ENCODE measurements at regions of chrX and their contacts with region 1.

Region 1: GRCh38 chrX:16445166-16445752 is 204.7 kb upstream of the S100G start:
- DNase-seq: peak in 8 of 9 experiments; percentile 1 to 65 (median 39)
- ATAC-seq: no peak
- H3K4me3 ChIP-seq: no peak overlapping the region
- H3K4me3 Mint-ChIP-seq: no peak overlapping the region
- H3K27ac ChIP-seq: no peak overlapping the region
- H3K27ac Mint-ChIP-seq: no peak overlapping the region
- H3K4me1 ChIP-seq: peaks cover 12% of the 10 kb centered on the region
- H3K4me1 Mint-ChIP-seq: peaks cover 10% of the 10 kb centered on the region
- H3K27me3 ChIP-seq: no peaks in the 10 kb centered on the region
- H3K27me3 Mint-ChIP-seq: no peaks in the 10 kb centered on the region
- CTCF ChIP-seq: peak; percentile 56

Region 2: GRCh38 chrX:15686818-15687685 is 758.2 kb before region 1 on chrX:
- CTCF ChIA-PET with region 1: no interaction called
- POLR2A ChIA-PET with region 1: no interaction called
- intact Hi-C with region 1: loop called in 1 of 2 experiments (anchors 1 kb)
- DNase-seq: peak; percentile 16 to 79 (median 60)
- ATAC-seq: peak; percentile 87
- H3K4me3 ChIP-seq: no peak overlapping the region
- H3K4me3 Mint-ChIP-seq: no peak overlapping the region
- H3K27ac ChIP-seq: no peak overlapping the region
- H3K27ac Mint-ChIP-seq: no peak overlapping the region
- H3K4me1 ChIP-seq: peaks cover 5% of the 10 kb centered on the region
- H3K4me1 Mint-ChIP-seq: peaks cover 7% of the 10 kb centered on the region
- H3K27me3 ChIP-seq: no peaks in the 10 kb centered on the region
- H3K27me3 Mint-ChIP-seq: no peaks in the 10 kb centered on the region
- CTCF ChIP-seq: peak; percentile 45

Region 3: DNA sequence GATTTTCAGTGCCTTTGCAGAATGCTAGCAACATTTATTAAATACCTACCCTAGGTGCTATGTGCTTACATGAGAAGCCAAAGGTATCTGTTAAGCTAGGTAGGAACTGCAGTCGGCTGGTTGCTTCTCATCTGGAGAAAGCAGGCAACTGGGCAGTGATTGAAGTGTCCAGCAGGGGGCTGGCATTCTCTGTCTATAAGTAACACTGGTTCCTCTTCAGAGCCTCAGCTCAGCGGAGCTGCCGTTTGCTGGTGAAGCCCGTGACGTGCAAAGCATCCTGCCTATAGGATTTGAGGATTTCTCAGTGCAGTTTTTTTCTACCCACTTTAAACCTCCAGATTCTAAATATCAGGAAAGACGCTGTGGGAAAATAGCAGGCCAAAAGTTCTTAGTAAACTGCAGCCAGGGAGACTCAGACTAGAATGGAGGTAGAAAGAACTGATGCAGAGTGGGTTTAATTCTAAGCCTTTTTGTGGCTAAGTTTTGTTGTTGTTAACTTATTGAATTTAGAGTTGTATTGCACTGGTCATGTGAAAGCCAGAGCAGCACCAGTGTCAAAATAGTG is 322.0 kb before region 1 on chrX and contains the start of gene GRPR:
- CTCF ChIA-PET with region 1: interaction called, 5 read pairs
- POLR2A ChIA-PET with region 1: no interaction called
- intact Hi-C with region 1: loop called in 1 of 2 experiments (anchors 10 kb)
- DNase-seq: peak in 8 of 9 experiments; percentile 19 to 64 (median 50)
- ATAC-seq: peak; percentile 83
- H3K4me3 ChIP-seq: no peak within 1 kb of the TSS
- H3K4me3 Mint-ChIP-seq: no peak within 1 kb of the TSS
- H3K27ac ChIP-seq: no peak within 1 kb of the TSS
- H3K27ac Mint-ChIP-seq: no peak within 1 kb of the TSS
- H3K4me1 ChIP-seq: no peaks in the 10 kb centered on the region
- H3K4me1 Mint-ChIP-seq: peaks cover 7% of the 10 kb centered on the region
- H3K27me3 ChIP-seq: no peaks in the 10 kb centered on the region
- H3K27me3 Mint-ChIP-seq: peaks cover 6% of the 10 kb centered on the region
- CTCF ChIP-seq: peak; percentile 24
- total RNA-seq, gene GRPR: 0.17 TPM in 1 of 2 experiments, not detected in the other

Region 4: GRCh38 chrX:16664074-16664473 is 218.8 kb after region 1 on chrX:
- CTCF ChIA-PET with region 1: interaction called, 5 read pairs
- POLR2A ChIA-PET with region 1: no interaction called
- intact Hi-C with region 1: loop called in 1 of 2 experiments (anchors 5 kb)
- DNase-seq: no peak
- ATAC-seq: no peak
- H3K4me3 ChIP-seq: no peak overlapping the region
- H3K4me3 Mint-ChIP-seq: no peak overlapping the region
- H3K27ac ChIP-seq: no peak overlapping the region
- H3K27ac Mint-ChIP-seq: no peak overlapping the region
- H3K4me1 ChIP-seq: no peaks in the 10 kb centered on the region
- H3K4me1 Mint-ChIP-seq: no peaks in the 10 kb centered on the region
- H3K27me3 ChIP-seq: no peaks in the 10 kb centered on the region
- H3K27me3 Mint-ChIP-seq: no peaks in the 10 kb centered on the region
- CTCF ChIP-seq: no peak

Region 5: DNA sequence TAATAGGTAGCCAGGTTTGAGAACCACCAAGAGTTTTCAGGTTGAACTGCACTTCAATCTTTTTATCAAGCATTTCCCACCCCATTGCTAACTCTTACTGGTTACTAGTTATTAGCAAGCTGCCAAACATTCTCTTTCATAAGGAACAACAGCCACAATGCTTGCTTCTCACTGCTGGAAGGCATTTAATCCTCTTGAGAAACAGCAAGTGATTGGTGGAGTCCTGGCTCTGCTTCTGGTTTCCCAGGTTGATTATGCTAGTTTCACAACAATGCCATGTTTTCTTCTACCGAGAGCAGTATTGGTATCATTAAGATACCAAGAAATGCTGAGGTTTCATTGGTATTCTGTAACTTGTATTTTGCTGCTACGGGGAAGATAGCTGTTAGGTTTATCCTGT is 308.8 kb after region 1 on chrX:
- CTCF ChIA-PET with region 1: no interaction called
- POLR2A ChIA-PET with region 1: no interaction called
- intact Hi-C with region 1: no loop called
- DNase-seq: no peak
- ATAC-seq: no peak
- H3K4me3 ChIP-seq: no peak overlapping the region
- H3K4me3 Mint-ChIP-seq: no peak overlapping the region
- H3K27ac ChIP-seq: no peak overlapping the region
- H3K27ac Mint-ChIP-seq: no peak overlapping the region
- H3K4me1 ChIP-seq: no peaks in the 10 kb centered on the region
- H3K4me1 Mint-ChIP-seq: no peaks in the 10 kb centered on the region
- H3K27me3 ChIP-seq: no peaks in the 10 kb centered on the region
- H3K27me3 Mint-ChIP-seq: no peaks in the 10 kb centered on the region
- CTCF ChIP-seq: no peak

Region 6: DNA sequence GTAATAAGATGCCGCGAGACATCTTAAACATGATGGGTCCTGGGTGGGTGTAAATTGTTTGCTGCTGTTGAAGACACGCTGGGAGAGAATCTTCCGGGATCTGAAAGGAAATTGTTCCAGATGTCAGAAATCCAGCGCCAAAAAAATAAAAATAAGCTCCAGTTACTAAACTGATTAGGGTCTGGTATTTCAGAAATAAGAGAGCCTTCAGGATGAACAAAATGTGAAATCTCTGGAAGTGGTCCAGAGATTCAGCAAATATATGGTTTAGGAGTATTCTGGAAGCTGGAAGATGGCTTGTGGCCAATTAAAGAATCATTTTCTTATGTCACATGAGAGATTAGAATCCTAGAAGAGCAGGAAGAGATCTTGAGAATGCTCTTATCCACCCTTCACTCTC is 853.9 kb after region 1 on chrX:
- CTCF ChIA-PET with region 1: no interaction called
- POLR2A ChIA-PET with region 1: no interaction called
- intact Hi-C with region 1: no loop called
- DNase-seq: no peak
- ATAC-seq: no peak
- H3K4me3 ChIP-seq: no peak overlapping the region
- H3K4me3 Mint-ChIP-seq: no peak overlapping the region
- H3K27ac ChIP-seq: no peak overlapping the region
- H3K27ac Mint-ChIP-seq: no peak overlapping the region
- H3K4me1 ChIP-seq: no peaks in the 10 kb centered on the region
- H3K4me1 Mint-ChIP-seq: no peaks in the 10 kb centered on the region
- H3K27me3 ChIP-seq: no peaks in the 10 kb centered on the region
- H3K27me3 Mint-ChIP-seq: no peaks in the 10 kb centered on the region
- CTCF ChIP-seq: no peak

Region 7: GRCh38 chrX:17736856-17737706 is 1291.8 kb after region 1 on chrX and contains the start of gene SCML1:
- CTCF ChIA-PET with region 1: no interaction called
- POLR2A ChIA-PET with region 1: no interaction called
- intact Hi-C with region 1: no loop called
- DNase-seq: peak; percentile 64 to 90 (median 86)
- ATAC-seq: peak; percentile 62
- H3K4me3 ChIP-seq: peak within 1 kb of the TSS; percentile 51 to 92
- H3K4me3 Mint-ChIP-seq: peak within 1 kb of the TSS; percentile 87
- H3K27ac ChIP-seq: peak within 1 kb of the TSS; percentile 88 to 95
- H3K27ac Mint-ChIP-seq: peak within 1 kb of the TSS; percentile 91
- H3K4me1 ChIP-seq: peaks cover 9% of the 10 kb centered on the region
- H3K4me1 Mint-ChIP-seq: peaks cover 35% of the 10 kb centered on the region
- H3K27me3 ChIP-seq: no peaks in the 10 kb centered on the region
- H3K27me3 Mint-ChIP-seq: no peaks in the 10 kb centered on the region
- CTCF ChIP-seq: no peak
- total RNA-seq, gene SCML1: 50.6 to 52.2 TPM